ENCODE measurements at regions of chr11 and their contacts with region 1.

Region 1: GRCh38 chr11:119728651-119729580 is at the start of gene NECTIN1:
- DNase-seq: peak; percentile 88
- H3K4me3 Mint-ChIP-seq: peak within 1 kb of the TSS; percentile 81
- H3K27ac Mint-ChIP-seq: no peak within 1 kb of the TSS
- H3K4me1 Mint-ChIP-seq: peaks cover 7% of the 10 kb centered on the region
- H3K27me3 Mint-ChIP-seq: peaks cover 77% of the 10 kb centered on the region

Region 2: GRCh38 chr11:119641983-119642745 is 86.8 kb before region 1 on chr11:
- CTCF ChIA-PET with region 1: interaction called, 13 read pairs
- DNase-seq: peak; percentile 25
- H3K4me3 Mint-ChIP-seq: no peak overlapping the region
- H3K27ac Mint-ChIP-seq: no peak overlapping the region
- H3K4me1 Mint-ChIP-seq: no peaks in the 10 kb centered on the region
- H3K27me3 Mint-ChIP-seq: peaks cover 11% of the 10 kb centered on the region

Region 3: GRCh38 chr11:119673759-119674336 is 55.1 kb before region 1 on chr11:
- CTCF ChIA-PET with region 1: interaction called, 47 read pairs
- DNase-seq: peak; percentile 45
- H3K4me3 Mint-ChIP-seq: no peak overlapping the region
- H3K27ac Mint-ChIP-seq: no peak overlapping the region
- H3K4me1 Mint-ChIP-seq: peaks cover 6% of the 10 kb centered on the region
- H3K27me3 Mint-ChIP-seq: peaks cover 15% of the 10 kb centered on the region

Region 4: DNA sequence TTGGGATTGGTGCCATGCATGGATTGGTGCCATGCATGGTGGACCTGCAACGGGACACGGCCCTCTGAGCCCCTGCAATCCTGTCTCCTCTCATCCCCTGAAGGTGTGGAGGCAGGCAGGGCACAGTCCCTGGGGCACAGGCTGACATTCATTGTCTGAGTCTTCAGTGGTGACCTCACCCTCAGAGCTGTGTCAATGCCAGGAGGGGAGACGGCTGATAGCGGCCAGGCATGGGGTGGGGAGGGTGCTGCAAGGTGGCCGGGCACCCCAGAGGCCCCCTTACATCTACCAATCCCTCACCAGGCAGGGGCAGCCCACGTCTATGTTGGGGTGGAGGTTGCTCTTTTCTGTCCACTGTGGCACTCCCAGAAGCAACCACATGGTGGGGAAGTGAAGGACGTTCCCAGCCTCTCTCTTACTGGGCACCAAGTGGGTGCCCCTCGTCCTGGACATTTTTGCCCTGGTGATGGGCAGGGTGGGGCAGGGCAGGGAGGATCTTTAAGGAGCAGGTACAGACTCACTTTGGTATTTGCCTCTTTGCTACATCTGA is 47.5 kb before region 1 on chr11:
- CTCF ChIA-PET with region 1: interaction called, 47 read pairs
- DNase-seq: no peak
- H3K4me3 Mint-ChIP-seq: no peak overlapping the region
- H3K27ac Mint-ChIP-seq: no peak overlapping the region
- H3K4me1 Mint-ChIP-seq: peaks cover 10% of the 10 kb centered on the region
- H3K27me3 Mint-ChIP-seq: peaks cover 18% of the 10 kb centered on the region

Region 5: DNA sequence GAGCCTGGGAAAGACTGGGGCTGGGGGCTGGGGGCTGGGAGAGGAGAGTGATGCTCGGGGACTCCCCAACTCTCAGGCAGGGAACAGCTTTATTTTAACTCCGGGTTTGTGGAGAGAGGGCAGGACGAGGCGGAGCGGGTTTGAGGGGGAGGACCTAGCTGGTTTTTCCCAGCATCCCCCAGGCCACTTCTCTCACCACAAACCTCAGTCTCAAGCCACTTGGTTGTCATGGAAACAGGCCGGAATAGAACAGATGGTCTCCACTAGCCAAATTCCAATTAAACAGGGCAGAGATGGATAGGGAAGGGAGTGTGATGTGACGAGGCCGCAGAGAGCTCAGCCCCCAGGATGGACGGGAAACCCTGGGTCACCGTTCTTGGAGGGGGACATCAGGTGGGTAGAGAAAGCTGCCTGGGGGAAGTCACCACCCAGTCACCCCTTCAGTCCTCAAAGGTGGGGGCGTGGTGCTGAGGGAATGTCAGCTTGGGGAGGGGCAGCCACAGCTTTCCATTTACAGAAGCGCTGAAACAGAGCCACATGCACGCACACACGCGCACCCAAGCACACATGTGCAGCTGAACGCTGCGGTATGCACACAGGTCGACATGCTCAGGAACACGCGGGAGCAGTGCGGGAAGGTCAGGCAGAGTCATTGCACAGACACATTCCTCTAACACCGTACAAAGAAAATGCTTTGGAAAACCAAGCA is 19.1 kb before region 1 on chr11:
- CTCF ChIA-PET with region 1: interaction called, 10 read pairs
- DNase-seq: no peak
- H3K4me3 Mint-ChIP-seq: no peak overlapping the region
- H3K27ac Mint-ChIP-seq: no peak overlapping the region
- H3K4me1 Mint-ChIP-seq: no peaks in the 10 kb centered on the region
- H3K27me3 Mint-ChIP-seq: peaks cover 77% of the 10 kb centered on the region

Region 6: DNA sequence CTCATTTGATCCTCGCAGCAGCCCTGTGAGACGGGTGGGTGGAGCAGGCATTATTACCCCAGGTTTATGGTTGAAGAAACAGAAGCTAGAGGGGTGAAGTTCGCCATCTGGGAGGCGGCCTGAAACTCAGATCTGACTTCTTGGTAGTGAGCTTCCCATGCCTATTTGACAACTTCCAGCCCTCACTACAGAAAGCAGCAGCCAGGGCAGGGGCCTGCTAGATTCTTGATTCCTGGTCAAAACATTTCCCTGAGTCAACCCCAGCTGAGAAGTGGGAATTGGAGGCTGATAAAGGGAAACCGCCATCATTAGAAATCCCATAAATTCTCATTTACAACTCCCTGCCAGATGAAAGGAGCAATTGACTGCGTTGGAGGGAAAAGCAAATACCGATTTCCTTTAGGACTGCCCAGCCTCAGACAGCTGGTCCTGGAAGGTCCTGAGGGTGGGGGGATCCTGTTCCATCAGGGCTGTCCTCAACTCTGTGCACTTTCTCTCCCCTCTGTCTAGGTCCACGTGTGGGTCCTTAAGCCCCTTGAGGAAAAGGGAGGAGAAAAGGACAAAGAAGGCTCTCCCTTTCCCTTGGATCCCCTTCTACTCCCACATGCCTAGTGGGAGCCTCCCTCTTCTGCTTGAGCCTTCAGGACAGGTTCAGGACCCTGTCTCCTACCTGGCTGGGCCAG is 10.2 kb after region 1 on chr11:
- CTCF ChIA-PET with region 1: interaction called, 12 read pairs
- DNase-seq: no peak
- H3K4me3 Mint-ChIP-seq: no peak overlapping the region
- H3K27ac Mint-ChIP-seq: no peak overlapping the region
- H3K4me1 Mint-ChIP-seq: peaks cover 3% of the 10 kb centered on the region
- H3K27me3 Mint-ChIP-seq: peaks cover 79% of the 10 kb centered on the region

Region 7: GRCh38 chr11:119854521-119854920 is 125.6 kb after region 1 on chr11:
- CTCF ChIA-PET with region 1: no interaction called
- DNase-seq: no peak
- H3K4me3 Mint-ChIP-seq: no peak overlapping the region
- H3K27ac Mint-ChIP-seq: no peak overlapping the region
- H3K4me1 Mint-ChIP-seq: no peaks in the 10 kb centered on the region
- H3K27me3 Mint-ChIP-seq: peaks cover 40% of the 10 kb centered on the region

Measured in activated naive CD4-positive, alpha-beta T cell treated with anti-CD3 and anti-CD28 coated beads, Interleukin-2, amount 10 ng/mL, durations not matched to agents 7 days and 5 days (primary cell).